Activated CD4-positive, alpha-beta T cell treated with anti-CD3 and anti-CD28 coated beads for 36 hours (primary cell): ENCODE measurements at regions of chr16 and their contacts with region 1.

Region 1: DNA sequence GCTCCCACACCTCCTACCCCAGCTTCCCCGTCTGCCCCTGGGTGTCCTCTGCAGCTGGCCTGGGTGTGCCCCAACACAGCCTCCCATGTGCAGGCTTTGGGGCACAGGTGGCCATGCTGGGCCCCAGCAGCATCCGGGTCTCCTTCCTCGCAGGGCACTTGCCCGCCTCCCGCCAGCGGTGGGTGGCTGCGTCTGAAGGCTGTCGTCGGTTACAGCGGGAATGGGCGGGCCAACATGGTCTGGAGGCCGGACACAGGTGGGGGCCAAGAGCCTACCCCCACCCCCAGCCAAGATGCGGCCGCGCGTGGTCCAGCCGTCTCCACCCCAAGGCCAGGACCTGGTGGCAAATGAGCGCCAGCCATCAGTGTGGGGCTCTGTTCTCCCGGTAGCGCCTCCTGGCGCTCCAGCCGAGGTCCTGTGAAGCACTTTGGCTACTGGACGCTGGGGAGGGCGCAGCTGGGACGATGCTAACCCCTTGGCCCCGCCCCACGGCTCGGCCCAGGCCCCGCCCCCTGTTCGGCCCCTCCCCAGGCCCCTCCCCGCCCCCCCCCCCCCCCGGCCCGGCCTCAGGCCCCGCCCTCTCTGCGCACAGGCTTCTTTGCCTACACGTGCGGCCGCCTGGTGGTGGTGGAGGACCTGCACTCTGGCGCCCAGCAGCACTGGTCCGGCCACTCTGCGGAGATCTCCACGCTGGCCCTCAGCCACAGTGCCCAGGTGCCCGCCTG is 7.3 kb upstream of the RHOT2 start:
- DNase-seq: peak; percentile 87
- ATAC-seq: peak; percentile 85
- H3K4me3 Mint-ChIP-seq: peak overlapping the region; percentile 35
- H3K27ac Mint-ChIP-seq: peak overlapping the region; percentile 60
- H3K4me1 Mint-ChIP-seq: peaks cover 5% of the 10 kb centered on the region
- H3K27me3 Mint-ChIP-seq: no peaks in the 10 kb centered on the region

Region 2: DNA sequence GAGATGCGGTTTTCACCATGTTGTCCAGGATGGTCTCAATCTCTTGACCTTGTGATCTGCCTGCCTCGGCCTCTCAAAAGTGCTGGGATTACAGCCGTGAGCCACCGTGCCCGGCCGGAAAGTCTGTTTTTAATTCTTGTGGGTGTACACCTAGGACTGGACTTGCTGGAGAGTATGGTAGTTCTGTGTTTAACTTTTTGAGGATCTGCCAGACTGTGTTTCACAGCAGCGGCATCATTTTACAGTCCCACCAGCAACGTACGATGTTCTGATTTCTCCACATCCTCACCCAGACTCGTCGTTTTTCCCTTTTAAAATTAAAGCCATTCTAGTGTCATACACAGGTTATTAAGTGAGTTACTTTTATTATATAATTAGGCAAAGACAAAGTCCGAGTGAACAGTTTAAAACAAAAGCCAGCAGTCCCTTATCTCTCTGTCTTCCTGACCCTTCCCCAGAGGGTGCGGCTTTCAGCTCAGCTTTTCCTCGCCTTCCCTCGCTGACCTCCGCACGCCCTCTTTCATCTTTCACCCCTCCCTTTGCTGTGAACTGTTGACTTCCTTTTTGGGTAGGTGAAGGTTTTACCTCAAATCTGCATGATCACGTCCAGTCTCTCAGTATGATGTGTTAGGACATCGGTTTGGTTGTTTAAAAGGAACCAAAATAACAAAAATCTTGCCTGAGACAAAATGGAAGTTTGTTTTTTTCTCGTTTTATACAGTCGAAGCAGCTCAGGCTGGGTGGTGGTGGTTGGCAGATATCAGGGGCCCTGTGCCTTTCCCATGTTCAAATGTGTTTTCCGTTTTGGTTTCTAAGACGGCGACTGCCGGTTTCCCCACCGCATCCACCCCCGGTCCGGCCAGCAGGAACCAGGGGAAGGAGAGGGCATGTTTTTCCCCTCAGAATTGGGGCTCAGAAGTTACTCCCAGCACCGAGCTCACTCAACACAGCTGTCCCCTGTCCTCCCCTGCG is 408.0 kb before region 1 on chr16:
- CTCF ChIA-PET with region 1: no interaction called
- POLR2A ChIA-PET with region 1: no interaction called
- intact Hi-C with region 1: no loop called
- DNase-seq: peak; percentile 68
- ATAC-seq: peak; percentile 84
- H3K4me3 Mint-ChIP-seq: peak overlapping the region; percentile 56
- H3K27ac Mint-ChIP-seq: peak overlapping the region; percentile 85
- H3K4me1 Mint-ChIP-seq: peaks cover 34% of the 10 kb centered on the region
- H3K27me3 Mint-ChIP-seq: no peaks in the 10 kb centered on the region

Region 3: DNA sequence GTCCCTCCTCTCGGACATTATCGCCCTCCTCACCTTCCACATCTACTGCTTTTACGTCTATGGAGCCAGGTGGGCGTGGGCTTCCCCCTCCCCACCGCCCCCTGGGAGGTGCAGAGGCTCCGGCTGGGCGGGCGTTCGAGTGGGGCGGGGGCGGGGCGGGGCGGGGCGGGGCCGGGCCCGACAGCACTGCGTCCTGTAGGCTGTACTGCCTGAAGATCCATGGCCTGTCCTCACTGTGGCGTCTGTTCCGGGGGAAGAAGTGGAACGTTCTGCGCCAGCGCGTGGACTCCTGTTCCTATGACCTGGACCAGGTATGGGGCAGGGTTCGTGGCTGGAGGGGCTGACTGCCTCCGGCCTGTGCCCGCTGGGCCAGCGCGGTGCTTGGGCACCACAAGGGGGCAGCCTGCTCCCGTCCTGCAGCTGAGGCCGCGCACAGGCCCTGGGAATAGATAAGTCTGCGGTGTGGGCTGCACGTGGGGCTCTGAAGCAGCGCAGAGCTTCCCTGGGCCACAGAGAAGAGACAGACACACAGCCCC is 81.7 kb before region 1 on chr16:
- CTCF ChIA-PET with region 1: no interaction called
- POLR2A ChIA-PET with region 1: no interaction called
- intact Hi-C with region 1: loop called in 1 of 2 experiments (anchors 1 kb)
- DNase-seq: peak; percentile 85
- ATAC-seq: peak; percentile 94
- H3K4me3 Mint-ChIP-seq: no peak overlapping the region
- H3K27ac Mint-ChIP-seq: no peak overlapping the region
- H3K4me1 Mint-ChIP-seq: no peaks in the 10 kb centered on the region
- H3K27me3 Mint-ChIP-seq: no peaks in the 10 kb centered on the region

Region 4: DNA sequence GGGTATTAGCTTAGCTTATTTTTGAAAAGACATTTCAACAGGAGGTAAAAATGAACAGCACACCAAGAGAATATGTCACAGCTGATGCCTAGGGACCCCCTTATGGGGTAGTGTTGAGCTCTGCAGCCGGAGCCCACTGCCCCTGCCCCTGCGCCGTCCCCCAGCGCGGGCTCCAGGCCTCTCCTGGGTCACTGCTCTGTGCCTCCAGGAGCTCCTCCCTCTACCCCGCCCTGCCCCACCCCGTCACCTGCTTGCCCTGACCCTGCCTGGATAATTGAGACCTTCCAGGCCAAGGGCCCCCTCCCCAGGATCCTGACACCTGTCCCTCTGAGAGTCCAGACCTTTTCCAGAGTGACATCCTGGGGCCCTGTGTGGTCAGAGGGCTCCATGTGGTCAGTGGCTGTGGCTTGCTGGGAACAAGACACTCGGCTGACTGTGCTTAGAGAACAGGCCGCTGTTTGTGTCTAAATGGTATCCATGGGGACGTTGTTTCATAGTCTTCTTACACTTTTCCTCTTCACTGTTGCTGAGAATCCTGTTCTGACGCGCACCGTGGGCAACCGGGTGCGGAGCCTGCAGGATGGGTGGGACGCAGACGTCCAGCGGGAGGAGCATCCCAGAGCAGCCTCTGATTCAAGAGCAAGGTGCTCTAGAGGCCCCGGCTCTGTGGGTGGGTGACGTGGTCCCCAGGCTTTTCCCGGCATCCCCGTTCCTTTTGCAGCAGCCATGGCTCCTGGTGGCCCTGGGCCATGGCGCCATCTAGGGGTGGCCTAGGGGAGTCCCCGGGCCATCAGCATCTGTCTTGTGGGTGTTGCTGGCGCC is 49.9 kb before region 1 on chr16:
- CTCF ChIA-PET with region 1: no interaction called
- POLR2A ChIA-PET with region 1: no interaction called
- intact Hi-C with region 1: loop called in 1 of 2 experiments (anchors 1 kb)
- DNase-seq: peak; percentile 82
- ATAC-seq: peak; percentile 57
- H3K4me3 Mint-ChIP-seq: no peak overlapping the region
- H3K27ac Mint-ChIP-seq: peak overlapping the region; percentile 32
- H3K4me1 Mint-ChIP-seq: peaks cover 17% of the 10 kb centered on the region
- H3K27me3 Mint-ChIP-seq: no peaks in the 10 kb centered on the region

Region 5: DNA sequence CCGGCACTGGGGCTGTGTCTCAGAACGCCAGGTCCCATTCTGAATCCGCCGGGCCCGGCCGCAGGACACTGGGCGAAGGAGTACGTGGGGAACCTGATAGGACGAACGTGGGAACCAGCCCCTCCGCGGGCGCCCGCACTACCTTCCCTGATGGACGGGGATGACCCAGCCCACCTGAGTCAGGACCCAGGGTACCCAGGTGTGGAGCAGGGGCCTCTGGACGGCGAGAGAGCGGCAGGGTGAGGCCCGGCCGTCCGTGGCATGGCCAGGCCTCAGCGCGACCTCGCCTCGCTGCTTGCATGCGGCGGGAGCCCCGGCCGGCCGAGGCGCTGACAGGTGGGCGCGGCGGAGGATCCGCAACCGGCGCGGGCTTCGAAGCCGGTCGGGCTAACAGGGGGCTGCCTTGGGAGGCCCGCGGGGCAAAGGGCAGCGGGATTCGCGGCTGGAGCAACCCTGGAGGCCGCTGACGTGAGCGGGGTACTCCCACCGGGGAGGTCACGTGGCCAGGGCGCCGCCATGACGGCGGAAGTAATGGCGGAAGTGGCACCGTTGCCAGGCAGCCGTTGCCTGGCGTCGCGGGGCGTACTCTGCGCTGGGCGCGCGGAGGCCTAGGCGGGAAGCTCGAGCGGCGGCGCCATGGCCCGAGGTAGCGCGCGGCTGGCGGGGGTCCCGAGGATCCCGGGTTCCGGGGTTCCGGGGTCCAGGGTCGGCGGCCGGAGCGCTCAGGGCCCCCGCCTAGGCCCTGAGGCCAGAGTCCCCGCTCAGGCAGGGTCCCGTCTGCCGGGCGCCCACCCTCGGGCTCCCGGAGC is 11.6 kb before region 1 on chr16 and contains the start of gene WDR90:
- CTCF ChIA-PET with region 1: interaction called, 9 read pairs
- POLR2A ChIA-PET with region 1: interaction called, 3 read pairs
- intact Hi-C with region 1: loop called in 1 of 2 experiments (anchors 1 kb)
- DNase-seq: peak; percentile 96
- ATAC-seq: peak; percentile 92
- H3K4me3 Mint-ChIP-seq: peak within 1 kb of the TSS; percentile 81
- H3K27ac Mint-ChIP-seq: peak within 1 kb of the TSS; percentile 73
- H3K4me1 Mint-ChIP-seq: peaks cover 15% of the 10 kb centered on the region
- H3K27me3 Mint-ChIP-seq: no peaks in the 10 kb centered on the region
- total RNA-seq, gene WDR90: 43.6 to 55.9 TPM